Naive thymus-derived CD4-positive, alpha-beta T cell (primary cell): ENCODE measurements at regions of chr18 and their contacts with region 1.

Region 1: GRCh38 chr18:57898506-57899124 is 95.5 kb upstream of the ATP8B1 start:
- DNase-seq: no peak
- ATAC-seq: no peak
- H3K4me3 ChIP-seq: no peak overlapping the region
- H3K4me3 Mint-ChIP-seq: no peak overlapping the region
- H3K27ac ChIP-seq: no peak overlapping the region
- H3K27ac Mint-ChIP-seq: no peak overlapping the region
- H3K4me1 ChIP-seq: no peaks in the 10 kb centered on the region
- H3K4me1 Mint-ChIP-seq: no peaks in the 10 kb centered on the region
- H3K27me3 ChIP-seq: no peaks in the 10 kb centered on the region
- H3K27me3 Mint-ChIP-seq: peaks cover 0 to 4% (median 0%) of the 10 kb centered on the region in 5 donors

Region 2: GRCh38 chr18:57863706-57864105 is 34.9 kb before region 1 on chr18:
- CTCF ChIA-PET with region 1: no interaction called
- POLR2A ChIA-PET with region 1: no interaction called
- intact Hi-C with region 1: loop called in 1 of 2 experiments (anchors 2 kb)
- DNase-seq: no peak
- ATAC-seq: no peak
- H3K4me3 ChIP-seq: no peak overlapping the region
- H3K4me3 Mint-ChIP-seq: no peak overlapping the region
- H3K27ac ChIP-seq: no peak overlapping the region
- H3K27ac Mint-ChIP-seq: no peak overlapping the region
- H3K4me1 ChIP-seq: no peaks in the 10 kb centered on the region
- H3K4me1 Mint-ChIP-seq: no peaks in the 10 kb centered on the region
- H3K27me3 ChIP-seq: no peaks in the 10 kb centered on the region
- H3K27me3 Mint-ChIP-seq: peaks cover 4 to 21% (median 10%) of the 10 kb centered on the region in 5 donors

Region 3: GRCh38 chr18:57881818-57882413 is 16.7 kb before region 1 on chr18:
- CTCF ChIA-PET with region 1: no interaction called
- POLR2A ChIA-PET with region 1: no interaction called
- intact Hi-C with region 1: no loop called
- DNase-seq: peak; percentile 2 to 48 (median 33)
- ATAC-seq: peak; percentile 79
- H3K4me3 ChIP-seq: no peak overlapping the region
- H3K4me3 Mint-ChIP-seq: no peak overlapping the region
- H3K27ac ChIP-seq: no peak overlapping the region
- H3K27ac Mint-ChIP-seq: no peak overlapping the region
- H3K4me1 ChIP-seq: no peaks in the 10 kb centered on the region
- H3K4me1 Mint-ChIP-seq: no peaks in the 10 kb centered on the region
- H3K27me3 ChIP-seq: no peaks in the 10 kb centered on the region
- H3K27me3 Mint-ChIP-seq: peaks cover 2 to 24% (median 20%) of the 10 kb centered on the region in 5 donors